Dendritic cell treated with granulocyte-macrophage colony-stimulating factor and Interleukin-4, amounts not matched to agents 40 ng/mL and 50 ng/mL, for 4 days (primary cell): ENCODE measurements at regions of chr9 and their contacts with region 1.

Region 1: GRCh38 chr9:2066312-2067273 is 51.4 kb downstream of the SMARCA2 start:
- H3K4me3 Mint-ChIP-seq: no peak overlapping the region
- H3K27ac Mint-ChIP-seq: no peak overlapping the region
- H3K4me1 Mint-ChIP-seq: no peaks in the 10 kb centered on the region
- H3K27me3 Mint-ChIP-seq: no peaks in the 10 kb centered on the region

Region 2: DNA sequence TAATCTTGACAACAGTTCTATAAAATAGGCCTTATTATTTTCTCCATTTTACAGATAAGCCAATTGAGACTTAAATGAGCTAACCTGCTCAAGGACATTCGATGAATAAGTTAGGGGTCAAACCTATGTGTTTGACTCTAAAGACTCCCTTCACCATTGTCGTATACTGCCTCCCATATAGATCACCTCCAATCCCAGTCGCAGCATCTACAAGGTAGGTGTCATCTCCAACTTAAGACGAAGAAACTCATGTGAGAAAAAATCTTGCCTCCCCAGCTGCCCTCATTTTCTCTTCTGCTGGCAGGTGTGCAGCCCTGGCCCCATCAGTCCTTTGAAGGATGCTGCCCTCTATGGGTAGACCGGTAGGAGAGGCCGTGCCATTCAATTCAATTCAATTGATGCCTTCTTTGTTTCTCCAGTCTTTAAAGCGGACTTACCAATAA is 126.6 kb before region 1 on chr9:
- intact Hi-C with region 1: loop called (anchors 10 kb)
- H3K4me3 Mint-ChIP-seq: no peak overlapping the region
- H3K27ac Mint-ChIP-seq: no peak overlapping the region
- H3K4me1 Mint-ChIP-seq: peaks cover 7% of the 10 kb centered on the region
- H3K27me3 Mint-ChIP-seq: no peaks in the 10 kb centered on the region